Ascending aorta (tissue), 2 donors: ENCODE measurements at regions of chr5 and their contacts with region 1.

Region 1: GRCh38 chr5:10353241-10354047 is at the start of gene MARCHF6:
- DNase-seq: peak; percentile 79 to 96
- H3K4me3 ChIP-seq: peak within 1 kb of the TSS; percentile 83 to 84
- H3K27ac ChIP-seq: peak within 1 kb of the TSS; percentile 95 to 96
- H3K4me1 ChIP-seq: peaks cover 0 to 15% of the 10 kb centered on the region in 2 donors
- H3K27me3 ChIP-seq: no peaks in the 10 kb centered on the region
- CTCF ChIP-seq: peak in 1 of 3 experiments; percentile 8
- total RNA-seq, gene MARCHF6: 47.0 TPM

Region 2: GRCh38 chr5:9534881-9535517 is 818.4 kb before region 1 on chr5:
- intact Hi-C with region 1: no loop called
- DNase-seq: peak in 1 of 2 donors; percentile 71
- H3K4me3 ChIP-seq: peak overlapping the region; percentile 33 to 51
- H3K27ac ChIP-seq: peak overlapping the region in 1 of 2 donors; percentile 47
- H3K4me1 ChIP-seq: peaks cover 0 to 35% of the 10 kb centered on the region in 2 donors
- H3K27me3 ChIP-seq: no peaks in the 10 kb centered on the region
- CTCF ChIP-seq: no peak

Region 3: GRCh38 chr5:10401498-10401897 is 48.1 kb after region 1 on chr5:
- intact Hi-C with region 1: loop called (anchors 2 kb)
- DNase-seq: no peak
- H3K4me3 ChIP-seq: no peak overlapping the region
- H3K27ac ChIP-seq: peak overlapping the region; percentile 35 to 43
- H3K4me1 ChIP-seq: peaks cover 0 to 14% of the 10 kb centered on the region in 2 donors
- H3K27me3 ChIP-seq: no peaks in the 10 kb centered on the region
- CTCF ChIP-seq: no peak

Region 4: DNA sequence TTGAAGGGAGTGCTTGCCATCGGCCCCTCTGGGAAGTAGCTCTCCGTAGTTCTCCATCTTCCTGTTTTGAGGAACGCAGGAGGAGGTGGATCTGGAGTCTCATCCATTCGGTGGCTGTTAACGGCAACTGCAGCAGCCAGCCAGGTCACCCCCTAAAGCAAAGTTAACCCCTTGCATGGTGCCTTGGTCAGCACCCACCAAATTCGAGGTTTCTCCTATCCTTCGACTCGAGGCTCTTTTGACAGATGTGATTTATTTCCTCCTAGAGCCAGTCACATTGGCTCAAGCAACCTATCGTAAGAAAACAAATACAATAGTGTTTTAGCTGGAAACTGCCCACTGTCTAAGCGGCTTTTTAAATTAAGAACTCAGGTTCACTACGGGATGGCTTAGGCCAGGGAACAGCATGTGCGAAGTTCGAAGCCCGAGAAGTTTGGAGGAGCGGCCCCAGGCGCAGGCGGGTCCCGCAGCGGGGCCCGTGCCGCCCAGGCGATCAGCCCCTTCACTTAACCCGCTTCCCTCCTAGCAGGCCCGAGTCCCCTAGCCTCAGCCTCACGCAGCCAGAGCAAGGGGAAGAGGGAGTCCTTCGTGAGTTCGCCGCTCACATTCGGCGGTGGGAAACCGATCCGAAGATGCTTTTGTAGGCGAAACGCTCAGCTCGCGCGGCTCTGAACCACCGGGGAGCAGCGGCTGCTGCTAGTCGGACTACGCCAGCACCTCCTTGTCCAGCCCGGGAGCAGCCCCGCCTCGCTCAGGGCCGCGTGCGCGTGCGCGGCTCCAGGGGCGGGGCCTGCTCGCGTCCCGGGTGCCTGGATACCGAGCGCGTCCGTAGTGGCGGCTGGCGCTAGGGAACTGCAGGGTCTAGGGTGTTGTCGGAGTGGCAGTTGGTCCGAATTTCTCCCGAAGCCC is 87.9 kb after region 1 on chr5 and contains the start of gene ROPN1L:
- intact Hi-C with region 1: loop called (anchors 5 kb)
- DNase-seq: peak; percentile 52 to 93
- H3K4me3 ChIP-seq: peak within 1 kb of the TSS; percentile 54 to 78
- H3K27ac ChIP-seq: peak within 1 kb of the TSS; percentile 47 to 54
- H3K4me1 ChIP-seq: peaks cover 3% of the 10 kb centered on the region in 2 donors
- H3K27me3 ChIP-seq: no peaks in the 10 kb centered on the region
- CTCF ChIP-seq: no peak
- total RNA-seq, gene ROPN1L: not detected

Region 5: GRCh38 chr5:10595678-10596309 is 242.3 kb after region 1 on chr5:
- intact Hi-C with region 1: loop called (anchors 10 kb)
- DNase-seq: no peak
- H3K4me3 ChIP-seq: peak overlapping the region; percentile 4 to 44
- H3K27ac ChIP-seq: peak overlapping the region; percentile 56 to 71
- H3K4me1 ChIP-seq: peaks cover 6 to 22% of the 10 kb centered on the region in 2 donors
- H3K27me3 ChIP-seq: no peaks in the 10 kb centered on the region
- CTCF ChIP-seq: no peak